BJ (cell line): ENCODE measurements at regions of chr2 and their contacts with region 1.

Region 1: GRCh38 chr2:95076784-95077529 is 44.7 kb downstream of the MRPS5 start:
- DNase-seq: no peak
- H3K4me3 ChIP-seq: peak overlapping the region; percentile 39
- H3K27me3 ChIP-seq: peaks cover 14% of the 10 kb centered on the region
- CTCF ChIP-seq: peak; percentile 95

Region 2: GRCh38 chr2:95022309-95023221 is 54.4 kb before region 1 on chr2:
- CTCF ChIA-PET with region 1: interaction called, 16 read pairs
- POLR2A ChIA-PET with region 1: no interaction called
- DNase-seq: no peak
- H3K4me3 ChIP-seq: no peak overlapping the region
- H3K27me3 ChIP-seq: peaks cover 25% of the 10 kb centered on the region
- CTCF ChIP-seq: peak; percentile 90

Region 3: DNA sequence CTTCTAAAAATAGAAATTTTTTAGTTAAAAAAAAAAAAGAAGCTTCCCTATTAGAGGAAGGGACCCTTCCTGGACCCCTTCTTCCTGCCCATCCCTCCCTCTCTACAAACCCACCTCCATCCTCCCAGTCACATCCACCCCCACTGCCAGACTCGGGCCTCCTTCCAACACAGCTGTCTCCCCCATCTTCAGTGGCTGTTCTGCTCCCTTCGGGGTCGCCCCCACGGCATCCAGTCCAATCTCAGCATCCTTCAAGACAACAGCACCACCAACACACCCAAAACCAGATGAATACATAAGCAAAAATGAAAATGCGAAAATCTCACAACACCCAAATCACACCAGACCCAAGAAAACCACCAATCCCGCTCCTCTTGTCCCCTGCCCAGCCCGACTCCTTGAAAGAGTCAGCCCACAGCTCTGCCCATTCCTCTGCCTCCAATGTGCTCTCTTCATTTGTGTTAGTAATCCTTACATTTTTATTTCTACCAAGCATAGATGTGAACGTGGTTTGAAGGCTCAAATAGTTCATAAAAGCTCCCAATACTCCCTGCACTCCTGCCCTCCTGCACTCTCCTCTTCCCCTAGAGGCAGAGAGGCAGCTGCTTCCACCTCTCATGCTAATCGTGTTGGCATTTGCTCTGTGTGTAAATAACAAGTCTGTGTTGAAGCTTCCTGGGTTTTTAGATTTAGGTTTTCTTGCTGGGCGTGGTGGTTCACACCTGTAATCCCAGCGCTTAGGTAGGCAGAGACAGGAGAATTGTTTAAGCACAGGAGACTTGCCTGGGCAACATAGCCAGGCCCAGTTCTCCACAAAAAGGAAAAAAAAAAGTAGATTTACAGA is 14.5 kb before region 1 on chr2:
- CTCF ChIA-PET with region 1: interaction called, 10 read pairs
- POLR2A ChIA-PET with region 1: no interaction called
- DNase-seq: no peak
- H3K4me3 ChIP-seq: no peak overlapping the region
- H3K27me3 ChIP-seq: peaks cover 8% of the 10 kb centered on the region
- CTCF ChIP-seq: no peak

Region 4: DNA sequence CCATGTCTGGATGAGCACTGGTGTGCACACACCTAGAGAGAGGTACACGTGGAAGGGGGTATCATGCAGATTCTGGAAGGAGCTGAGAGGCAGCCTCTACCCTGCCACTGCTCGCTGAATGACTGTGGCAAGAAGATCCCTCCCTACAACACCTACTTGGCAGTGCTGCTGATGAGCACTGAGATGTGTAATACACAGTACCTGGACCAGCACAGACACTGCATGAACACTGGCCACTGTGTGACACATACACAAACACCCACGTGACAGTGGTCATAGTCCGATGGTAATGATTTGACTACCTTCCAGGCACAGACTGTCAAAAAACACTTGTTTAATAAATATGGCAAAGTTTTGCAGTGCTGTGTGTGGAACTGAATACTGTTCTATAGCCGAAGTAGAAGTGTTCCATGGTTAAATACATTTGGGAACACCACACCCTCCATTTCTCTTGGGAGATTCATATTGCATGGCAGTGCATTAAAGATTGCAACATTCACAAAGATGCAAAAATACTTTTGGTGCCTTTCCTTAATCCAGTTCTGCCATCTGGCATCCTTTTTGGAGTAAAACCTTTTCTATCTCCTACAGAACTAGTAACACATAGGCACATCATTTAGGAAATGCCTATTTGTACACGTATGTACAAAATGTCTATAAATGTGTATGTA is 15.1 kb after region 1 on chr2:
- CTCF ChIA-PET with region 1: interaction called, 13 read pairs
- POLR2A ChIA-PET with region 1: no interaction called
- DNase-seq: no peak
- H3K4me3 ChIP-seq: no peak overlapping the region
- H3K27me3 ChIP-seq: no peaks in the 10 kb centered on the region
- CTCF ChIP-seq: no peak

Region 5: DNA sequence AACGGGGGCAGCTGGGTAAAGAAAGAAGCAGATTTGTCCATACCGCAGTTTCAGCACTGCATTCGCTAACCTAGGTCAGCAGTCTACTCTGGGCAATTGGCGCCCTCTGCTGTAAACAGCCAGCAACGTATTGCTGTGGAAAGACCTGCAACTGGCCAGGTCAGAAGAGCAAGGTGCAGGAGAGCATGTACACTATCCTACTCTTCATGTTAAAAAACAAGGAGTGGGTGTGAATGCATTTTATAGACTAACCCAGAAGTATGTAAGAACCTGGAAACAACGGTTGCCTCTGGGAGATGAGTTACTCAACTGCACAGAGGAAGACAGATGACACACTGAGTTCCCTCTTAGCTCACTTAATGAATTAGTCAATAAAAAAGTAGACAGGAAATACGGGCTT is 38.5 kb after region 1 on chr2:
- CTCF ChIA-PET with region 1: interaction called, 16 read pairs
- POLR2A ChIA-PET with region 1: no interaction called
- DNase-seq: peak; percentile 7
- H3K4me3 ChIP-seq: no peak overlapping the region
- H3K27me3 ChIP-seq: no peaks in the 10 kb centered on the region
- CTCF ChIP-seq: peak; percentile 86

Region 6: DNA sequence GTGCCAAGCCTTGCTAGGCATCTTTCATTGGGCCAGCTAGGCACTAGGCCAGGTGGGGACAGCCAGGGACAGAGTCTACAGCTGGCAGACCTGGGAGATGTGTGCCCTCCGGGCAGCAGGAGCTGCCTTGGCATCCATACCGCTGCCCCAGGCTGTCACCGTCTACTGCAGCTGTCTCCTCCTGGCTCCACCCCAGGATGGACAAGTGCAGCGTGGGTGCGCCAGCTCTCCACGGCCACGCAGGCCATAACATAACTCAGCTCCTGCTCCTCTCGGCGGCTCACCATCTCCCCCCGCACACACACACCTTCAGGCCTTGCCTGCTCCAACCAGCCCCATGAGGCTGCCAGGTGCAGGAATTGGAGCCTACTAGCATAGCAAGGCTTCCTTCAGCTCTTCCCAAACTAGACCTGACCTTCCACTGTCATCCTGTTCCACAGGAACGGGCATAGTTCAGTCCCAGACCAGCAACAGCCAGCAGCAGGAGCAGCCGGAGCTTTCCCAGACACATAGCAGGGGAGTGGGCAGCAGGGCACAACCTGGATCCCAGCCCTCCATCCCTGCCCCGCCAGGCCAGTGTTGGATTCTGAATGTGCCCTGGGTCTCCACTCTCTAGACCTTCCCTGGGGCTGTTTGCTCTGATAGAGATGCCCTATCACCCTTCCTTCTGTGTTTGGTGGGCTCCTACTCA is 1041.9 kb after region 1 on chr2:
- CTCF ChIA-PET with region 1: no interaction called
- POLR2A ChIA-PET with region 1: no interaction called
- DNase-seq: no peak
- H3K4me3 ChIP-seq: no peak overlapping the region
- H3K27me3 ChIP-seq: peaks cover 47% of the 10 kb centered on the region
- CTCF ChIP-seq: no peak